T-cell (primary cell): ENCODE measurements at regions of chr7 and their contacts with region 1.

Region 1: DNA sequence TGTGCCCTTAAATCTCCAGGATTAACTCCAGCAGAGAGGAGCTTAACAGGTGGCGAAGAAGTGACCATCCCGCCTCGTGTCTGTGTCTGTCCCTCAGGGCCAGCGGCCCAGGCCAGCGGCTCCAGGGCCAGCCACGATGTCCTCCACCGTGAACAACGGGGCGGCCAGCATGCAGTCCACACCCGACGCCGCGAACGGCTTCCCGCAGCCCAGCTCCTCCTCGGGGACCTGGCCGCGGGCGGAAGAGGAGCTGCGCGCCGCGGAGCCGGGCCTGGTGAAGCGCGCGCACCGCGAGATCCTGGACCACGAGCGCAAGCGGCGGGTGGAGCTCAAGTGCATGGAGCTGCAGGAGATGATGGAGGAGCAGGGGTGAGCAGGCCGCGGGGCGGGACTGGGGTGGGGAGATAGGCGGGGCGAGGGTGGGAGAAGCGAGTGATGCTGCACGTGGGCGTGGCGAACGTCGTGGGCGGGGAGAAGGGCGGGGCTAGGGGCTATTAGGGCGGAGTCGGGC is 33.3 kb downstream of the SRRM3 start:
- DNase-seq: peak; percentile 12 to 68 (median 46)
- ATAC-seq: peak; percentile 73 to 96 (median 80)
- H3K4me3 ChIP-seq: peak overlapping the region in 1 of 2 donors; percentile 27
- H3K4me3 Mint-ChIP-seq: peak overlapping the region; percentile 57 to 64 (median 59)
- H3K27ac ChIP-seq: no peak overlapping the region
- H3K27ac Mint-ChIP-seq: no peak overlapping the region
- H3K4me1 ChIP-seq: peaks cover 2 to 9% of the 10 kb centered on the region in 2 experiments
- H3K4me1 Mint-ChIP-seq: peaks cover 0 to 8% (median 8%) of the 10 kb centered on the region in 3 donors
- H3K27me3 ChIP-seq: peaks cover 6 to 69% of the 10 kb centered on the region in 2 experiments
- H3K27me3 Mint-ChIP-seq: peaks cover 55 to 61% of the 10 kb centered on the region in 2 donors

Region 2: DNA sequence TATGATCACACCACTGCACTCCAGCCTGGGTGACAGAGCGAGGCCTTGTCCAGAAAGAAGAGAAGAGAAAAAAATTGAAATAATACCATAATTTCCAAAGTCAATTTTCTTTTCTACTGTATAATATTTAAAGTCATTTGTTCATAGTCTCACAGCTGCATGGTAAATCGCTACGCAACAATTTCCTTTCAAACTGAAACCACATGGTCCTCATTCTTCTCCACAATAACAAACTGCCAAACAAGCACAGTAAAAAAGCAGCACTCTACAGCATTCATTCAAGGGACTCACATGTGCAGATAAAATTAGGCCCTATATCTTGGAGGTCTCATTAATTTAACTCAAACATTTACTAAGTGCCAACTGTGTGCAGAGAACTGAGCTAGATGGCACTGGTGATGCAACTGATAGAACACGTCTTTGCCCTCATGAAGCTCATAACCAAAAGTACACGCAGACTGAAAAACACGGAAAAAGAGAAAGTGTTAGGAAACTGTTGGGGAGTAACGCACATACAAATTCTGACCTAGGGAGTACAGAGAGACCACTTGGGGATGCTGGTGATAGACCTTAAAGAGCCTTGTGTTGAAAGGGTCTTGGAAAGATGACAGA is 101.7 kb before region 1 on chr7:
- CTCF ChIA-PET with region 1: no interaction called
- POLR2A ChIA-PET with region 1: no interaction called
- DNase-seq: peak in 2 of 35 experiments; percentile 2 to 19
- ATAC-seq: peak; percentile 40 to 74 (median 62)
- H3K4me3 ChIP-seq: peak overlapping the region in 1 of 2 donors; percentile 3
- H3K4me3 Mint-ChIP-seq: peak overlapping the region; percentile 66 to 77 (median 74)
- H3K27ac ChIP-seq: no peak overlapping the region
- H3K27ac Mint-ChIP-seq: peak overlapping the region; percentile 93 to 98
- H3K4me1 ChIP-seq: peaks cover 9 to 10% of the 10 kb centered on the region in 2 experiments
- H3K4me1 Mint-ChIP-seq: peaks cover 19 to 45% (median 36%) of the 10 kb centered on the region in 3 donors
- H3K27me3 ChIP-seq: peaks cover 0 to 7% of the 10 kb centered on the region in 2 experiments
- H3K27me3 Mint-ChIP-seq: peaks cover 1 to 5% of the 10 kb centered on the region in 2 donors

Region 3: DNA sequence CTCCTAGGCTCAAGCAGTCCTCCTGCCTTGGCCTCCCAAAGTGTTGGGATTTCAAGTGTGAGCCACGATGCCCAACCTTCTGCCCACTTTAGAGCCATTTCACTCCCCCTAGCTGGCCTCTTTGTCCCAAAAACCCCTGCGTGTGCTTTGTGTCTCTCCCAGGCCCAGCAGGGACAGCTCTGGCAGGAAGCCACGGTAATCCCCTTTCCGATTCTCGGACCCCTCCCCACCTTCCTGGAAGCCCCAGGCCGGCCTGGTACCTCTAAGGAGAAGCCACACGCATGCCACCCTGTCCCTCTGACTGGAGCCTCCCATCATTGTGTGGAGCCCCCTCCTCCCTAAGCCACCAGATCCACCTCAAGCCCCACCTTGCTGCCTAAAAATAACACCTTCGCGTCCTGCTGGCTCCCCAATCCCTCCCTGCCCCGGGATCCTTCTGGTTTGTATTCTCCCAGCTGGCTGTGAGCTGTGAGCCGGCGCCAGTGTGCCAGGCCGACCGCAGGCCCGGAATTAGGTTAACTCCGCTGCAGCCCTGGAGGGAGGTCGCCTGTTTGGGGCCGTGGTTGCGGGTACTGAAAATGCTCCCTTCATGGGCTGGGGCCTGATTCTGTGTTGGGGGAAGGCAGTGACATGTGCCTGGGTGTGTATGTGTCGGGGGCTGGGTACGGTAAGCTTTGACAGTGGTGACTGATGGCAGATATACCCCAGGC is 49.6 kb before region 1 on chr7:
- CTCF ChIA-PET with region 1: no interaction called
- POLR2A ChIA-PET with region 1: no interaction called
- DNase-seq: no peak
- ATAC-seq: no peak
- H3K4me3 ChIP-seq: no peak overlapping the region
- H3K4me3 Mint-ChIP-seq: no peak overlapping the region
- H3K27ac ChIP-seq: no peak overlapping the region
- H3K27ac Mint-ChIP-seq: no peak overlapping the region
- H3K4me1 ChIP-seq: no peaks in the 10 kb centered on the region
- H3K4me1 Mint-ChIP-seq: no peaks in the 10 kb centered on the region
- H3K27me3 ChIP-seq: peaks cover 0 to 25% of the 10 kb centered on the region in 2 experiments
- H3K27me3 Mint-ChIP-seq: peaks cover 2 to 8% of the 10 kb centered on the region in 2 donors

Region 4: GRCh38 chr7:76262683-76263402 is 27.9 kb after region 1 on chr7:
- CTCF ChIA-PET with region 1: no interaction called
- POLR2A ChIA-PET with region 1: interaction called in 1 of 2 experiments, 18 read pairs
- DNase-seq: peak in 5 of 35 experiments; percentile 15 to 55 (median 26)
- ATAC-seq: peak in 3 of 4 experiments; percentile 35 to 52 (median 39)
- H3K4me3 ChIP-seq: no peak overlapping the region
- H3K4me3 Mint-ChIP-seq: no peak overlapping the region
- H3K27ac ChIP-seq: no peak overlapping the region
- H3K27ac Mint-ChIP-seq: peak overlapping the region in 1 of 2 donors; percentile 52
- H3K4me1 ChIP-seq: peaks cover 0 to 19% of the 10 kb centered on the region in 2 experiments
- H3K4me1 Mint-ChIP-seq: peaks cover 0 to 8% (median 5%) of the 10 kb centered on the region in 3 donors
- H3K27me3 ChIP-seq: peaks cover 0 to 69% of the 10 kb centered on the region in 2 experiments
- H3K27me3 Mint-ChIP-seq: peaks cover 29 to 51% of the 10 kb centered on the region in 2 donors